MCF 10A (cell line): ENCODE measurements at regions of chr5 and their contacts with region 1.

Region 1: DNA sequence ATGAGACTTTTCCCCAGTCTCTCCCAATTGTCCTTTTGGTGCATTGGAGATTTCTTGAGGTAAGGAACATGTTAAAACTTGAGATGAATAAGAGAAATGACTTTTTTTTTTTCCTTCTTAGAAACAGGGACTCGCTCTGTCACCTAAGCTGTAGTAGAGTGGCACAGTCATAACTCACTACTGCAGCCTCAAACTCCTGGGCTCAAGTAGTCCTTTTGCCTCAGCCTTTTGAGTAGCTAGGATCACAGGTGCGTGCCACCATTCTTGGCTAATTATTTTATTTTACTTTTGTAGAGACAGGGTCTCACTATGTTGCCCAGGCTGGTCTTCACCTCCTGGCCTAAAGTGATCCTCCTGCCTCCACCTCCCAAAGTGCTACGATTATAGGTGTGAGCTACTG is 25.9 kb downstream of the CDC42SE2 start:
- DNase-seq: no peak
- H3K4me3 Mint-ChIP-seq: no peak overlapping the region
- H3K27ac Mint-ChIP-seq: peak overlapping the region; percentile 39
- H3K4me1 Mint-ChIP-seq: peaks cover 16% of the 10 kb centered on the region
- H3K27me3 Mint-ChIP-seq: no peaks in the 10 kb centered on the region
- CTCF ChIP-seq: no peak

Region 2: GRCh38 chr5:131270809-131271208 is 18.9 kb before region 1 on chr5:
- CTCF ChIA-PET with region 1: interaction called, 5 read pairs
- POLR2A ChIA-PET with region 1: interaction called, 37 read pairs
- intact Hi-C with region 1: no loop called
- DNase-seq: peak; percentile 57
- H3K4me3 Mint-ChIP-seq: peak overlapping the region; percentile 13
- H3K27ac Mint-ChIP-seq: peak overlapping the region; percentile 33
- H3K4me1 Mint-ChIP-seq: peaks cover 47% of the 10 kb centered on the region
- H3K27me3 Mint-ChIP-seq: no peaks in the 10 kb centered on the region
- CTCF ChIP-seq: no peak

Region 3: GRCh38 chr5:131303537-131303936 is 13.8 kb after region 1 on chr5:
- CTCF ChIA-PET with region 1: interaction called, 3 read pairs
- POLR2A ChIA-PET with region 1: interaction called, 30 read pairs
- intact Hi-C with region 1: no loop called
- DNase-seq: peak; percentile 83
- H3K4me3 Mint-ChIP-seq: peak overlapping the region; percentile 10
- H3K27ac Mint-ChIP-seq: peak overlapping the region; percentile 97
- H3K4me1 Mint-ChIP-seq: peaks cover 67% of the 10 kb centered on the region
- H3K27me3 Mint-ChIP-seq: no peaks in the 10 kb centered on the region
- CTCF ChIP-seq: no peak

Region 4: GRCh38 chr5:131364507-131365050 is 74.8 kb after region 1 on chr5:
- CTCF ChIA-PET with region 1: no interaction called
- POLR2A ChIA-PET with region 1: no interaction called
- intact Hi-C with region 1: no loop called
- DNase-seq: no peak
- H3K4me3 Mint-ChIP-seq: no peak overlapping the region
- H3K27ac Mint-ChIP-seq: peak overlapping the region; percentile 4
- H3K4me1 Mint-ChIP-seq: peaks cover 13% of the 10 kb centered on the region
- H3K27me3 Mint-ChIP-seq: no peaks in the 10 kb centered on the region
- CTCF ChIP-seq: no peak

Region 5: DNA sequence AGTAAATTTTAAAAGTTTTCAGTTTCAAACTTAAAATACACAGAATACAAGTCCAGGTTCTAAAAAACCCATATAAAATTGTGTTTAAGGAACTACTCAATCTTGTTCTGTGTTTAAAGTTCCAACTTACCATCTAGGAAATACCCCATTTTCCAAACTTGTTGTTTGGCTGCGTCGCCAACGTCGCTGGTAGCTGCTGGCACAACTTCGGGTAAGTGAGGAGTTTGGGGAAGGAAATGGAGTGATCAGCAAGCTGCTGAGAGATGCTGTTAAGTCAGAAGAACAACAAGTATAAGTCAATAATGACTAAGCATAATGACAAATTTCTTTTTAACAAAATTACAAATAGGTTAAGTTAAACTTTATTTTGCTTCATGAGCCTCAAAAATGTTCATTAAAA is 416.5 kb after region 1 on chr5:
- CTCF ChIA-PET with region 1: no interaction called
- POLR2A ChIA-PET with region 1: no interaction called
- intact Hi-C with region 1: no loop called
- DNase-seq: no peak
- H3K4me3 Mint-ChIP-seq: no peak overlapping the region
- H3K27ac Mint-ChIP-seq: no peak overlapping the region
- H3K4me1 Mint-ChIP-seq: no peaks in the 10 kb centered on the region
- H3K27me3 Mint-ChIP-seq: no peaks in the 10 kb centered on the region
- CTCF ChIP-seq: no peak